ENCODE measurements at regions of chr5 and their contacts with region 1.

Region 1: GRCh38 chr5:6576861-6577501 is 55.9 kb downstream of the NSUN2 start:
- DNase-seq: no peak
- H3K4me3 ChIP-seq: no peak overlapping the region
- H3K27ac ChIP-seq: peak overlapping the region; percentile 10 to 78
- H3K4me1 ChIP-seq: peaks cover 4 to 6% of the 10 kb centered on the region in 2 donors
- H3K27me3 ChIP-seq: no peaks in the 10 kb centered on the region
- CTCF ChIP-seq: peak; percentile 14 to 71 (median 42)

Region 2: GRCh38 chr5:5572010-5572865 is 1004.7 kb before region 1 on chr5:
- intact Hi-C with region 1: loop called (anchors 10 kb)
- DNase-seq: peak; percentile 51 to 91
- H3K4me3 ChIP-seq: peak overlapping the region; percentile 1 to 49
- H3K27ac ChIP-seq: peak overlapping the region; percentile 81 to 84
- H3K4me1 ChIP-seq: peaks cover 8 to 24% of the 10 kb centered on the region in 2 donors
- H3K27me3 ChIP-seq: no peaks in the 10 kb centered on the region
- CTCF ChIP-seq: no peak

Region 3: DNA sequence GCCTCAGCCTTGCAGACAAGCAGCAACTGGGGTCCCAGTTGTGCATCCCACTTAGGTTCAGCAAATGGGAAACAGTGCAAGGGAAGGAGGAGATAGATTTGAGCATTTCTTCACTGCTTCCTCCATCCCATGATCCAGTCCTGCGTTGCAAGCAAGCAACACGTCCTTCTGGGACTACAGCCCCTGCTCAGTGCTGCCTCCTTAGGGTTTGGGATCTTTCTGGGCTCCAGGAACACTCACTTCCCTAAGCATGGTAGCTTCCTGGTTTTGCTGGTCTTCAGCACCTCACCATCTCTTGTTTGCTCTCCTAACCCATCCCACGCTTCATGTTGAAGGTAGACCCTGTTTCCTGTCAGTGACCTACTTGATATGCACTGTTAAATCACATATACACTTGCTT is 643.3 kb before region 1 on chr5:
- intact Hi-C with region 1: no loop called
- DNase-seq: no peak
- H3K4me3 ChIP-seq: no peak overlapping the region
- H3K27ac ChIP-seq: no peak overlapping the region
- H3K4me1 ChIP-seq: no peaks in the 10 kb centered on the region
- H3K27me3 ChIP-seq: no peaks in the 10 kb centered on the region
- CTCF ChIP-seq: no peak

Region 4: GRCh38 chr5:6291961-6292360 is 285.0 kb before region 1 on chr5:
- intact Hi-C with region 1: loop called (anchors 2 kb)
- DNase-seq: no peak
- H3K4me3 ChIP-seq: no peak overlapping the region
- H3K27ac ChIP-seq: no peak overlapping the region
- H3K4me1 ChIP-seq: no peaks in the 10 kb centered on the region
- H3K27me3 ChIP-seq: no peaks in the 10 kb centered on the region
- CTCF ChIP-seq: peak in 1 of 3 experiments; percentile 23

Region 5: GRCh38 chr5:6448622-6449464 is 128.1 kb before region 1 on chr5 and contains the start of gene UBE2QL1:
- intact Hi-C with region 1: loop called (anchors 2 kb)
- DNase-seq: no peak
- H3K4me3 ChIP-seq: peak within 1 kb of the TSS; percentile 67 to 72
- H3K27ac ChIP-seq: peak within 1 kb of the TSS in 1 of 2 donors; percentile 40
- H3K4me1 ChIP-seq: peaks cover 0 to 14% of the 10 kb centered on the region in 2 donors
- H3K27me3 ChIP-seq: no peaks in the 10 kb centered on the region
- CTCF ChIP-seq: no peak
- total RNA-seq, gene UBE2QL1: 0.85 TPM

Region 6: DNA sequence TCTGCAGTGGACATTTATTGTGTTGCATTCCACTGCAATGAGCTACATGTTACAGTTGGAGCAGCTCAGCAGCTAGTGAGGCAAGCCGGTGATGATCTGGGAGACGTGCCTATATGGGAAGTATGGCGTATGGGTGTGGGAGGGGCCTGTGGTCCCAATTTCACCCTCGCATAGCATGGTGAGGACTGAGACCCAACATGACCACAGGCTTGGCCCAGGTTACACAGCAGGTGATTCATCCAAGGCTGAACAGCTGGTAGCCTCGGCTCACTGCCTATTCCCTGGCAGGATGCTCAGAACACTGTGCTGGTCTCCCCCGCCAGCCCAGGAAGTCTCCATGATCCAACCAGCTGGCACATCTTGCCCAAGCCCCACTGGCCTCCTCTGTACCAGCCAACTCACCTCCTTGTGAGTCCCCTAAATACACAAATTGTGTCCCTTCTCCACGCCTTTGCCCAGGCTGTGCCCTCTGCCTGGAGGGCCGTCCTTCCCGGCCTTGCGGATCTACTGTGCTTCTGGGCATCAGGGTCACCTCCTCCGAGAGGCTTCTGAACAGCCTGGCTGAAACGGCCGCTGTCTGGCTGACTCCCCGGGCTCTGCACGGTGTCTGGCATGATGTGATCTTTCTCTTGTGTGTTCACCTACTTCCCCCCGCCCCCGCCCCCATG is 25.6 kb before region 1 on chr5:
- intact Hi-C with region 1: loop called (anchors 1 kb)
- DNase-seq: peak; percentile 81 to 85
- H3K4me3 ChIP-seq: peak overlapping the region in 1 of 2 donors; percentile 2
- H3K27ac ChIP-seq: peak overlapping the region; percentile 64 to 73
- H3K4me1 ChIP-seq: peaks cover 0 to 15% of the 10 kb centered on the region in 2 donors
- H3K27me3 ChIP-seq: no peaks in the 10 kb centered on the region
- CTCF ChIP-seq: no peak

Region 7: DNA sequence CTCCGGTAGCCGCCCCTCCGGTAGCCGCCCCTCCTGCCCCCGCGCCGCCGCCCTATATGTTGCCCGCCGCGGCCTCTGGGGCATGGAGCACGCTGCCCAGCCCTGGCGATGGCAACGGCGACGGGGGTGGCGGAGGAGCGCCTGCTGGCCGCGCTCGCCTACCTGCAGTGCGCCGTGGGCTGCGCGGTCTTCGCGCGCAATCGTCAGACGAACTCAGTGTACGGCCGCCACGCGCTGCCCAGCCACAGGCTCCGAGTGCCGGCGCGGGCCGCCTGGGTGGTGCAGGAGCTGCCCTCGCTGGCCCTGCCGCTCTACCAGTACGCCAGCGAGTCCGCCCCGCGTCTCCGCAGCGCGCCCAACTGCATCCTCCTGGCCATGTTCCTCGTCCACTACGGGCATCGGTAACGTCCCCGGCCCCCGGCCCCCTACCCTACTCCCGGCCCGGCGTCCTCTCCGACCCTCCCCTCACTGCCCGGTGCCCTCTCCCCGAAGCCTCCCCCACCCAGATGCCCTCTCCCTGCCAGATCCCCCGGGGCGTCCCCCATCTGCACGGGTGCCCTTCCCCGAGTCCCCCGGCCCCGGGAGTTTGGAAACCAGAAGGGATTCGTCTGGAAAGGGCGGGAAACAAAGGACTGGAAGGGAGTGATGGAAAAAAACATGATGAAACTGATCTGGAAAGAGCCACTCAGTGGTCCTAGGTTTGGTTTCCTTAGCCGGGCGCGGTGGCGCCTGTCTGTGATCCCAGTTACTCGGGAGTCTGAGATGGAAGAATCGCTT is 56.7 kb after region 1 on chr5:
- intact Hi-C with region 1: no loop called
- DNase-seq: peak in 1 of 2 donors; percentile 78
- H3K4me3 ChIP-seq: peak overlapping the region; percentile 74 to 87
- H3K27ac ChIP-seq: peak overlapping the region; percentile 83 to 97
- H3K4me1 ChIP-seq: peaks cover 0 to 14% of the 10 kb centered on the region in 2 donors
- H3K27me3 ChIP-seq: no peaks in the 10 kb centered on the region
- CTCF ChIP-seq: peak in 1 of 3 experiments; percentile 3

Region 8: DNA sequence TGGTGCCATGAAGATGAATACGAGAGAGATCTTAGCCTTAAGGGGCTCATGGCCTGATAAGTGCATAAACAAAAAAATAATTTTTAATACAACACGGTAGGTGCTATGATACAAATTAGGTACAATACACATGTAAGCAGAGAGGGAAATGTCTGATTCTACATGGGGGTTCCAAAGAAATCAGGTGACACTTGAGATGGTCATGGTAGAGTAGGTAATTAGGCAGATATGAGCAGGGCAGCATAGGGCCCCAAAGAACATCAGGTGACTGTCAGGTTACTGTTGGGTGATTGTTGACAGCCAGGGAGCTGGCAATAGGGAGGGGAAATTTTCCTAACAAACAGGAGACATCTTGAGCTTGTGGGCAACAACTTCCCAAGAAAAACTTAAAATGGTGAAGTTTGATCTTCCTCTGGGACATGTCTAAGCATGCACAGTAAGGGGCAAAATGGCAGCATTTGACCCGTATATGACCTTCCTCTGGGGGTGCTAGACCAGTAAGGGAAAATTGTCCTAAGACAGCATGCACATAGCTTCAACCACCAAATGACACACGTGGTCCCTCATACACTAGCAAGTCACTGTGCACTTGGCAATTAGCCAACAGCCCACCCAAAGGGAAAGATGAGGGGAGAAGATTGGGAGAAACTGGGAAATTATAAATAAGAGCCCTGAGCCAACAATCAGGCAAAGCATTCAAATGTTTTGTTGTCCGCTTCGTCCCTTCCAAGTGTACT is 99.0 kb after region 1 on chr5:
- intact Hi-C with region 1: no loop called
- DNase-seq: no peak
- H3K4me3 ChIP-seq: no peak overlapping the region
- H3K27ac ChIP-seq: no peak overlapping the region
- H3K4me1 ChIP-seq: no peaks in the 10 kb centered on the region
- H3K27me3 ChIP-seq: no peaks in the 10 kb centered on the region
- CTCF ChIP-seq: no peak

Measured in ascending aorta (tissue), 2 donors.